MCF 10A (cell line): ENCODE measurements at regions of chr22 and their contacts with region 1.

Region 1: GRCh38 chr22:33209930-33210784 is 152.0 kb upstream of the SYN3 start:
- DNase-seq: peak; percentile 34
- H3K4me3 Mint-ChIP-seq: no peak overlapping the region
- H3K27ac Mint-ChIP-seq: no peak overlapping the region
- H3K4me1 Mint-ChIP-seq: peaks cover 8% of the 10 kb centered on the region
- H3K27me3 Mint-ChIP-seq: peaks cover 19% of the 10 kb centered on the region
- CTCF ChIP-seq: peak; percentile 74

Region 2: DNA sequence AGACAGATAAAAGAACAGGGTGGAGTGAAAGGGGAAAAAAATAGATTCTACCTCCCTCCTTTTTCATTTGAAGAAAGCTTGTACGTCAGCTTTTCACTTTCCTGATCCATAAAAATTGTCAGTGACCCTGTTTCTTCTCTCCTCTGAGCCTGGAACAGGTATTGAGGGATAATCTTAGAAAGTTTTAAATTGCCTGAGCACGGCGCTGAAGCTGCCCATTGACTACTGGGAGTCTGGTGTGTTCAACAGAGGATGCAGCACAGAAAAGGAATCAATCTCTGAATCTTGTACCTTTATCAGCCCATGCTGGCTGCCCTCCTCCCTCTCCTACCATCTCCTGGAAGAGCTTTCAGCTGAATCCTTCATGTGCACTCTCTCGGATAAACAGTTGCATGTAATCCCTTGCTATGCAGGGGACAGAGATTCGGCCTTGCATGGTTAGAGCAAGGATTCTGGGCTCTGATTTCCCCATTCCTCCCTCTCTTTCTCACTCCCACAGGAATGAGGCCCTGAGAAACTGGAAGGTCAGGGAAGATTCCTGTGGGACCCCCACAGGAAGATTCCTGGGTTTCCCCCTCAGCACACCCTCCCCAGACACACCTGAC is 10.4 kb after region 1 on chr22:
- CTCF ChIA-PET with region 1: interaction called, 11 read pairs
- POLR2A ChIA-PET with region 1: interaction called, 3 read pairs
- intact Hi-C with region 1: no loop called
- DNase-seq: no peak
- H3K4me3 Mint-ChIP-seq: no peak overlapping the region
- H3K27ac Mint-ChIP-seq: no peak overlapping the region
- H3K4me1 Mint-ChIP-seq: peaks cover 8% of the 10 kb centered on the region
- H3K27me3 Mint-ChIP-seq: no peaks in the 10 kb centered on the region
- CTCF ChIP-seq: no peak

Region 3: DNA sequence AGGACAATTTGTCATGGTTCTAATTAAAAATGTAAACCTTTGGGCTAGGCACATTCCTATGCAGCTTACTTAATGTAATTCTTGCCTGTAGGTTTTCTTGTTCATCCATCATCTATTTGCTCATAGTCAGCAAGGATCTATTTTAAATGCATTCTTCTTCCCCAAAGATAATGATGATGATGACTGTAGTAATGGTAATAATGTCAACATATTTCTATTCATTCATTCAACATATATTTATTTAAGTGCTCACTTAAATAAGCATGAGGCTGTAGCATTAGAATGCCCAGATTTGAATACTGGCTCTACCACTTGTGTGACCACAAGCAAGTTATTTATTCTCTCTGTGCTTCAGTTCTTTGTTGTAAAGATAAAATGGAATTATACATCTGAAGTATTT is 17.6 kb after region 1 on chr22:
- CTCF ChIA-PET with region 1: interaction called, 11 read pairs
- POLR2A ChIA-PET with region 1: no interaction called
- intact Hi-C with region 1: no loop called
- DNase-seq: no peak
- H3K4me3 Mint-ChIP-seq: no peak overlapping the region
- H3K27ac Mint-ChIP-seq: no peak overlapping the region
- H3K4me1 Mint-ChIP-seq: no peaks in the 10 kb centered on the region
- H3K27me3 Mint-ChIP-seq: no peaks in the 10 kb centered on the region
- CTCF ChIP-seq: no peak

Region 4: DNA sequence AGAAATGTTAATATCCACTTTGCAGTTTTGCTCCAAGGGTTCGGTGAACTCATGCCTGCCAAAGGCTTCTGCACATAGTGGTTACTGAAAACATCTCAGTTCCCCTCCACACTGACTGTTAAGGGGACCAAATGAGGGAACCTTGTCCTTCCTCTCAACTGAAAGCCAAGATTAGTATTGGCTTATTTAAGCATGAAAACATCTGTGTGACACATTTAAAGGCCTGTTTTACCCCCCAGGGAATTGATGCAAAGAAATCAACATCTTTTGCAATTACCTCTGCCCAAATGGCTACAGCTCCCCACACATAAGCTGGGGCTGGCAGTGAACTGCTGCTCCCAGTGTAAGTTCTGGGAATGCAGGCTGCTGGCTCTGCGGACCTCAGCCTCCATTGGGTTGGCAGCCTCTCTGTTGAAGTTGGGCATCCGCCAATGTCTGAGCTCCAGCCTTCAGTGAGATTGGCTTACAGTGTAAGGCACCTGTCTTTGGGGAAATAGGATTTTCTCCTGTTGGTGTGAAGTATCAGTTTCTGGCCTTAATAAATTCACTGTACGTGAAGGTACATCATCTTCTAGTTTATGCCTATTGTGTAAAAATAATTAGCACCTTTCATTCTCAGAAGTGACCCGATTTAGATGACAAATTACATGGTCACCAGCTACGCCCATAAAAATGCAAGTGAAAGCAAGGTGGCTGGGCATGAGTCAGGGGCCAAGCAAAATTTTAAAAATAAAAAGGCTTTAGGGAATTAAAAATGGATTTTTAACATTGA is 61.4 kb after region 1 on chr22:
- CTCF ChIA-PET with region 1: interaction called, 4 read pairs
- POLR2A ChIA-PET with region 1: no interaction called
- intact Hi-C with region 1: loop called (anchors 10 kb)
- DNase-seq: peak; percentile 62
- H3K4me3 Mint-ChIP-seq: no peak overlapping the region
- H3K27ac Mint-ChIP-seq: no peak overlapping the region
- H3K4me1 Mint-ChIP-seq: peaks cover 15% of the 10 kb centered on the region
- H3K27me3 Mint-ChIP-seq: no peaks in the 10 kb centered on the region
- CTCF ChIP-seq: no peak

Region 5: GRCh38 chr22:33288078-33288477 is 77.9 kb after region 1 on chr22:
- CTCF ChIA-PET with region 1: no interaction called
- POLR2A ChIA-PET with region 1: no interaction called
- intact Hi-C with region 1: no loop called
- DNase-seq: no peak
- H3K4me3 Mint-ChIP-seq: no peak overlapping the region
- H3K27ac Mint-ChIP-seq: no peak overlapping the region
- H3K4me1 Mint-ChIP-seq: no peaks in the 10 kb centered on the region
- H3K27me3 Mint-ChIP-seq: no peaks in the 10 kb centered on the region
- CTCF ChIP-seq: no peak

Region 6: GRCh38 chr22:33337524-33337923 is 127.4 kb after region 1 on chr22:
- CTCF ChIA-PET with region 1: no interaction called
- POLR2A ChIA-PET with region 1: no interaction called
- intact Hi-C with region 1: no loop called
- DNase-seq: no peak
- H3K4me3 Mint-ChIP-seq: no peak overlapping the region
- H3K27ac Mint-ChIP-seq: no peak overlapping the region
- H3K4me1 Mint-ChIP-seq: no peaks in the 10 kb centered on the region
- H3K27me3 Mint-ChIP-seq: no peaks in the 10 kb centered on the region
- CTCF ChIP-seq: no peak

Region 7: DNA sequence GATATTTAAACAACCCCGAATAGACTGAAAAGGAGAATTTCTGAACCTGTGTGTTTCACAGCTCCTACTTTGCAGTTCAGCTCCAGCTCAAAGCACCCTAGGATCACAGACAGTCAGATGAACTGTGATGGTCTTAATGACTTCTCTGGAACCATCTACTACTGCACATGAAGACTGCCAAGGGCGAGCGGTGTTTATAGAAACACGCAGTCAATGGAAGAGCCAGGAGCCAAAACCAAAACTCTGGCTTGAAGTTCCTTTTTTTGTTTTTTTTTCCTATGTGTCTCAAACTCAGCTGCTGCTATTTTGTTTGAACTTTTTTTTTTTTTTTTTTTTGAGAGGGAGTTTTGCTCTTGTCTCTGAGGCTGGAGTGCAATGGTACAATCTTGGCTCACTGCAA is 230.6 kb after region 1 on chr22:
- CTCF ChIA-PET with region 1: no interaction called
- POLR2A ChIA-PET with region 1: no interaction called
- intact Hi-C with region 1: no loop called
- DNase-seq: no peak
- H3K4me3 Mint-ChIP-seq: no peak overlapping the region
- H3K27ac Mint-ChIP-seq: no peak overlapping the region
- H3K4me1 Mint-ChIP-seq: peaks cover 30% of the 10 kb centered on the region
- H3K27me3 Mint-ChIP-seq: no peaks in the 10 kb centered on the region
- CTCF ChIP-seq: no peak

Region 8: GRCh38 chr22:33579448-33580093 is 369.4 kb after region 1 on chr22:
- CTCF ChIA-PET with region 1: no interaction called
- POLR2A ChIA-PET with region 1: no interaction called
- intact Hi-C with region 1: loop called (anchors 1 kb)
- DNase-seq: peak; percentile 9
- H3K4me3 Mint-ChIP-seq: no peak overlapping the region
- H3K27ac Mint-ChIP-seq: no peak overlapping the region
- H3K4me1 Mint-ChIP-seq: no peaks in the 10 kb centered on the region
- H3K27me3 Mint-ChIP-seq: no peaks in the 10 kb centered on the region
- CTCF ChIP-seq: peak; percentile 83